SK-N-SH (cell line): ENCODE measurements at regions of chr2 and their contacts with region 1.

Region 1: DNA sequence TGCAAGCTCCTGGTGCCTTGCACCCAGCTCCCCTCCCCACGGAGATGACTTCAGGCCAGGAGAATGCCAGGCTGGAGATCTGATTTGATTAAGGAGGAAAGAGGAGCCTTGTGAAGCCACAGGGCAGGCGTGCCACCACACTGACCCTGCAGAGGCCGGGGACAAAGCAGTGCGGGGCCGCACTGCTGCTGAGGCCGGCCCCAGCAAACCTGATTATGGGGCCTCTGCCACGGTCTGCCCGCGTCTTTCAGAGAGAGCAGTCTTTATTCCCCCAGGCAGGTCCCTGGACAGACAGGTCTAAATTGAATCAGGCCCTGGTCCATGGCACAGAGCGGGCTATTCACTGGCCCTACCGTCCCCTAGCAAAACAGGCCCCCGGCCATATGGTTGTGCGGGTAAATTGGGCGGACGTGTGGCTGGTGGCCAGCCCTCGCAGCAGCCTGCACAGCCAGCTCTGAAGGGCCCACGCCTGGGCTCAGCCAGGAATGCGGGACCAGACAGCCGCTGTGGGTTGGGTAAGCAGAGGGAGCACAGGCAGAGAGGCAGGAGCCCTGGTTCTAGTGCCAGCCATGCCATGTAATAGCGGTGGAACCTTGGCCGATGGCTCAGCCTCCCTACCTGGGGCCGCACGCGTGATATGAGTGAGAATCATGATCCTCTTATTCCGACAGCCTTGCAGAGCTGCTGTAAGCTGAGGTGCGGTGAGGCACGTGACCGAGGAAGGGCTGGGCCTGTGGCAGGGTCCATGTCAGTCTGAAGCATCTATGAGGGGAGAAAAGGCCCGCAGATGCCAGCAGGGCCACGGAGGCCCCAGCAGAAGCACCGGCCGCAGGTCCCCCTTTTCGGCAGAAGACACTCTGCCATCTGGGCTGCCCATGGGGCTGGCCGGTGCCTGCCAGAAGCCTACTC is 97.3 kb upstream of the MYCN start:
- DNase-seq: peak; percentile 96
- H3K4me3 ChIP-seq: no peak overlapping the region; a peak in 1 of 4 replicates
- H3K27ac ChIP-seq: peak overlapping the region in 1 of 2 experiments; percentile 100; a peak in 2 of 4 replicates
- H3K4me1 ChIP-seq: peaks cover 0 to 71% of the 10 kb centered on the region in 2 experiments; a peak in 2 of 4 replicates
- H3K27me3 ChIP-seq: no peaks in the 10 kb centered on the region
- CTCF ChIP-seq: no peak
- EP300 ChIP-seq: peak in 1 of 2 experiments; percentile 91; a peak in 2 of 4 replicates
- RAD21 ChIP-seq: peak; percentile 37

Region 2: DNA sequence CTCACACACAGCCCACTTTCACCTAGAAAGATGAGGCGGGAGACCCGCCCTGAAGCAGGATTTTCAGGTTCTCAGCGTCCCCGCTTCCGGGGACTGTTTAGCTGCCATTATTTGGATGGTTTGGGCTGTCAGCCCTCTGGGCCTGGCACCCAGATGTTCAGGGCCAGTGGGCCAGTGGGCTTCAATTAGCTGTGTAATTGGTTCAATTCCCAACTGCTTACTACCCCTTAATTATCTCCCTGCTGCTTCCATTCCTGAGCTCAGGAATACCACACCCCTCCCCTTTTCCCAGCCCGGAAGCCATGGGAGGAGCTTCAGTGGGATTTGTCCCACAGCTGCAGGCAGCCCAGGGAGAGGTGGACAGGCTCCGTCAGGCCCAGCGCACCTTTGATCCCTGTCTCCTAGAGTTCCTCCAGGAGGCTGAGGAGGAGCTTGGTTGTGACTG is 16.7 kb before region 1 on chr2:
- CTCF ChIA-PET with region 1: interaction called, 14 read pairs
- POLR2A ChIA-PET with region 1: interaction called, 12 read pairs
- DNase-seq: peak; percentile 77
- H3K4me3 ChIP-seq: no peak overlapping the region
- H3K27ac ChIP-seq: peak overlapping the region in 1 of 2 experiments; percentile 44; a peak in 1 of 4 replicates
- H3K4me1 ChIP-seq: peaks cover 0 to 17% of the 10 kb centered on the region in 2 experiments; a peak in 1 of 4 replicates
- H3K27me3 ChIP-seq: no peaks in the 10 kb centered on the region
- CTCF ChIP-seq: no peak
- EP300 ChIP-seq: peak in 1 of 2 experiments; percentile 62; a peak in 1 of 4 replicates
- RAD21 ChIP-seq: no peak; the same call in 1 of the 2 replicates

Region 3: GRCh38 chr2:15881676-15882075 is 38.7 kb after region 1 on chr2:
- CTCF ChIA-PET with region 1: no interaction called
- POLR2A ChIA-PET with region 1: no interaction called
- DNase-seq: no peak
- H3K4me3 ChIP-seq: no peak overlapping the region
- H3K27ac ChIP-seq: no peak overlapping the region
- H3K4me1 ChIP-seq: peaks cover 0 to 6% of the 10 kb centered on the region in 2 experiments; a peak in 1 of 4 replicates
- H3K27me3 ChIP-seq: no peaks in the 10 kb centered on the region
- CTCF ChIP-seq: no peak
- EP300 ChIP-seq: no peak
- RAD21 ChIP-seq: no peak